ENCODE measurements at regions of chr12 and their contacts with region 1.

Region 1: GRCh38 chr12:54865683-54866324 is 11.5 kb downstream of the MUCL1 start:
- ATAC-seq: peak in 1 of 8 experiments; percentile 32
- H3K4me3 ChIP-seq: no peak overlapping the region
- H3K27ac ChIP-seq: no peak overlapping the region
- H3K4me1 ChIP-seq: no peaks in the 10 kb centered on the region

Region 2: DNA sequence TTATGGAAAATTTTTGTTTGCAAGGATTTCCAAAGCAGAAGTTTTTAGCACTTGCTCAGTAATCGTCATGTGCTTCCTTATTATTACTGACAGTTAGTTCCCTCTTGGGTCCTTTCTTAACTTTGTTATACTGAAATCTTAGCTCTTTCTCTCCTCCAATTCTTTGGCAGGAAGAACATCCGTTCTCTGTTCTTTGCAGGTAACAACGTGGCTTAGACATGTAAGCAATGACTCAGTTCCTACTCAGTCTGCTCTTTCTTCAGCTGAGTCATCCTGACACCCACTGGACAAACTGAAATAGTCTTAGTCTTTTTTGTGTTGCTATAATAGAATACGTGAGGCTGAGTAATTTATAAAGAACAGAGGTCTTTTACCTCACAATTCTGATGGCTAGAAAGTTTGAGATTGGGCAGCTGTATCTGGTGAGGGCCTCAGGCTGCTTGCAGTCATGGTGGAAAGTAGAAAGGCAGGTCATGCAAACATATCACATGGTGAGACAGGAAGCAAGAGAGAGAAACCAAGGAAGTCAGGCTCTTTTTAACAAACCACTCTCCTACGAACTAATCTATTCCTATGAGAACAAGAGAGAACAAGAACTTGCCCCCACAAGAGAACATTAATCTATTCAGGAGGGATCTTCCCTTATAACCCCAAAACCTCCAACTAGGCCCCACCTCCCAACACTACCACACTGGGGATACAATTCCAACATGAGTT is 69.6 kb after region 1 on chr12:
- in situ Hi-C with region 1: loop called in 1 of 9 experiments (anchors 10 kb)
- ATAC-seq: peak in 4 of 8 experiments; percentile 45 to 92 (median 74)
- H3K4me3 ChIP-seq: no peak overlapping the region
- H3K27ac ChIP-seq: no peak overlapping the region
- H3K4me1 ChIP-seq: no peaks in the 10 kb centered on the region

Measured in motor neuron (in vitro differentiated cells).